ENCODE measurements at regions of chr5 and their contacts with region 1.

Region 1: DNA sequence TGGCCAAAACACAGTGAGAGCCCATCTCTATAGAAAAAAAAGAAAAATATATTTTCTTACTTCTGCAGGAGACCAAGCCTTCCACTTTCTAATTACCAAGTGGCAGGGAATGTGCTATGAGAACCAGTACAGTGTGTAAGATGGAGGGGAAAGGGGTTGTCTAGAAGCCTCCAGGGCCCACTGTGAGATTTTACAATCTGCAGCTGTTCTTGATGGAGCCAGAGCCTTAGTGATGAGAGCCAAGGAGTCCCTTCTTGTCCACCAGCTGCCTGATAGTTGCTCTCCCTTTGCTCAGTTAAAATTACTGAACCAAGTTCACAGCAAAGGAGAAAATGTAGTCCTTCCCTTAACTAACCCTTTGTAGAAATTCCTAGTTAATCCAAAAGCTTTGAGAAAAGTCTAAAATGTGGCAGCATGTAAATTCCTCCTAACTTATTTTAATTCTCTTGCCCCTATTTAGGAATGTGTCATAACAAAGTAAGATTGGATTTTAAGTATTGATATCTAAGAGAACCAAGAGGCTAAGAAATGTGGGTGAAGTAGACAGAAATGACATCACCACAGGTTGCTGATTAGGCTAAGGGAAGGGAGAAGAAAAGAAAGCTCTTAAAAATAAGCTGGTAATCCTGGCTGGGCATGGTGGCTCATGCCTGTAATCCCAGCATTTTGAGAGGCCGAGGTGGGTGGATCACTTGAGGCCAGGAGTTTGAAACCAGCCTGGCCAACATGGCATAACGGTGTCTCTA is 19.3 kb downstream of the SRP19 start:
- DNase-seq: no peak
- ATAC-seq: no peak

Region 2: GRCh38 chr5:111748304-111748763 is 1132.1 kb before region 1 on chr5:
- intact Hi-C with region 1: loop called (anchors 5 kb)
- DNase-seq: no peak
- ATAC-seq: no peak

Region 3: DNA sequence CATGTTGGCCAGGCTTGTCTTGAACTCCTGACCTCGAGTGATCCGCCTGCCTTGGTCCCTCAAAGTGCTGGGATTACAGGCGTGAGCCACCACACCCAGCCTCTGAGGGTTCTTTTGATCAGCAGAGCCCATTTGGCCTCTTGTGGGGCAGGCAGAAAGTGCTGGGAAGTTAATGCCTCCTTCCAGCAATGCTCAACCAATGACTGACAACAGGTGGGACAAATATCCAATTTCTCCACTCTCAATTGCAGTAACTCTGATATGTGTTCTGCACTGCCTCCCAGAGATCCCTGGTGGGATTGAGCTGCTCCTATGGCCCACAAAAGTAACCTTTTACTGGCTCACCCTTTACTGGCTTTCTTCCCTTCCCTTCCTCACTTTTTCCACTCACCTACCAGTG is 222.6 kb before region 1 on chr5:
- intact Hi-C with region 1: no loop called
- DNase-seq: no peak
- ATAC-seq: no peak

Region 4: DNA sequence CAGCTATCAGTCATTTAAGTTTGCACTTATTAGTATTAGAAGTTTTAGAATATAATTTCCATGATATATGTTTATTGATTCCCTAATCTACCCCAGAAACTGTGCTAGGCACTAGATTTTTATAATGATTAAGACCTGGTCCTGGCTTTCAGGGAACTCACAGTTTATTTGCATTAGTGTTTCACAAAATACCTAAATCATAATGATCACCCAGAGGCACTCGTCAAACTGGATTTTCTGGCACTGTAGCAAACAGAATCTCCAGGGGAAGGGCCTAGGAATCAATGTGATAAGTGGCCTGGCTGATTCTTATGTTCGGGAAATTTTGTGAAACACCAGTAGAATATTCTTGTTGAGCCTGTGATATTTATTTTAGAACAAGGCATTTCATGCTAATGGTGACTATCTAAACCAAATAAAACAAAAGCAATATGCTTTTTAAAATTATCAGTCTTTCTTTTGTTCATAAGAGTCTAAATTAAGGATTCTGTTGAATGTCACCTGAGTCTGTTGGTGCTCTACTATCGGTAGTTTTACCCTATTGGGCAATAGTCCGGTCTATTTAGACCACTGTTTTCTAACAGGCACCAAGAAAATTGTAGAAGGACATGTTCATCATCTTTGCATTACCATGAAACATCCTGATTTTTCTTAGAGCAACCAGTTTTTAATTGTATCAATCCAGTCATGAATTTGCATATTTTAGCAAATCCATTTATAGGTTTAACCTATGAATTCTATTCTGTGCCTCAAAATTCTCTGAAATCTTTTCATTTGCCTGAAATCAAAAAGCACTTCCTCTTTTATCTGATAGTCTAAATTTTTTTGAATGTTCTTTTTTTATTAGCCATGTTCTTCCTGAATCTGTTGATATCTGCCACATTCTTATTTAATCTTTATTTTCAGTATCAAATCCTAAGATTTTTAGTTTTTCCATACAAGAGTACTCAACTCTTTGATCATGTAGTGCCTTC is 56.5 kb before region 1 on chr5:
- intact Hi-C with region 1: no loop called
- DNase-seq: no peak
- ATAC-seq: no peak

Region 5: DNA sequence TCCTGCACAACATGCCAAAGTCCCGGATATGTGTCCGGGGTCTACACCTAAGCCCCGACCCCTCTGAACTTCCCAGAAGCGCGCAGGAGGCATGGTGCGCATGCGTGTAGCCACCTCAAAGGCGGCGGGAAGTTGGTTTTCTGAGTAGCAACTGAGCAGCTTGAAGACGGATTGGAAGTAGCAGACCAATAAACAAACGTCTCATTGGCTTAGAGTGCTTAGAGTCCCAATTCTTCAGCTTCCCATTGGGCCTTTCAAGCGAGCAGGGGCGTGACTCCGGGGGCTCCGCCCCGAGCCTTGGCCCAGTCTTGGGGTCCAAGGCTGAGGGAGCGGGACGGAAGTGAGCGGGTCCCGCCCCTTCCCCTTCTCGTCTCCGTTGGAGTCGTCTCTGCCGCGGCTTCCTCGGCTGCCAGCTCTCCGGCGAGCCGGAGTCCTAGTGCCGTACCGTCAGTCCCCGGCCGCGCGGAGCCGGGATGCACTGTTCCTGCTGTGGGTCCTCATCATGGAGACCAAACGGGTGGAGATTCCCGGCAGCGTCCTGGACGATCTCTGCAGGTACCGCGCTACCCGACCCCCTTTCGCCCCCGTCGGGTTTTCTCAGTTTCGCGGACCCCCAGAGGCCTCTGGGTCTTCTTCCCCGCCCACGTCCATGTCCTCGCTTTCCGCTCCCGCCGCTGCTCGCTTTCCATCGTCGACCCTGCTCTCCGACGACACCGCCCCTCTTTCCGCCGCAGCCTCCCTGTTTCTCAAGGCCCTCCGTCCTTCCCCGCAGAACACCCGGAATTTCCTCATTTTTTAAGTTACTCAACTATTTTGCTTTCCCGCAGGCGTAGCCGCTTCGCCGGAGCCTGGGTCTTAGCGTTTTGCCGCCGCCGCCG is 96.3 kb after region 1 on chr5 and contains the start of gene DCP2:
- intact Hi-C with region 1: no loop called
- DNase-seq: peak; percentile 95
- ATAC-seq: peak; percentile 99
- total RNA-seq, gene DCP2: 57.4 TPM

Region 6: GRCh38 chr5:113022661-113023060 is 142.3 kb after region 1 on chr5:
- intact Hi-C with region 1: no loop called
- DNase-seq: no peak
- ATAC-seq: no peak

Measured in sciatic nerve (tissue), 2 donors.